OCI-LY7 (cell line): ENCODE measurements at regions of chr7 and their contacts with region 1.

Region 1: DNA sequence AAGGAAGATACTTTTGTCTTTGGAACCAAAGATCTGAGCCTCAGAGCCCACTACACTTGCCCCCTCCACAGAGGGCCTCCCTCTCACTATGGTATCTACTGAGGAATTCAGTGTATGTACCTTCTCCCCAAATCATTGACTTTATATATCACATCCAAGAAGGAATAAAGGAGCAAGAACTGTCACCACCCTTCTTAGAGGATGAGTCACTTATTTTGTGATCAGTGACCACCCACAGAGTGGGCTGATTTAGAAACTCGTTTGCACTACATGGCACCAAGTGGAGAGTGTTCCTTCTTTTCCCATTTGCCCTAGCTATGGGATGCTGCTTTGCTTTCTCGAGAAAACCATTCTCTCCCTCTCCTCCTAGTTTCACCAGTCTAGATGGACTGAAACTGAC is 5.7 kb downstream of the TMEM243 start:
- DNase-seq: no peak
- H3K4me3 ChIP-seq: peak overlapping the region; percentile 82
- H3K27ac ChIP-seq: peak overlapping the region; percentile 98
- H3K4me1 ChIP-seq: peaks cover 63% of the 10 kb centered on the region
- CTCF ChIP-seq: no peak

Region 2: GRCh38 chr7:87027900-87028299 is 185.9 kb before region 1 on chr7:
- CTCF ChIA-PET with region 1: no interaction called
- POLR2A ChIA-PET with region 1: no interaction called
- intact Hi-C with region 1: no loop called
- DNase-seq: peak; percentile 2
- H3K4me3 ChIP-seq: no peak overlapping the region
- H3K27ac ChIP-seq: no peak overlapping the region
- H3K4me1 ChIP-seq: peaks cover 8% of the 10 kb centered on the region
- CTCF ChIP-seq: no peak

Region 3: GRCh38 chr7:87100326-87100725 is 113.5 kb before region 1 on chr7:
- CTCF ChIA-PET with region 1: no interaction called
- POLR2A ChIA-PET with region 1: no interaction called
- intact Hi-C with region 1: no loop called
- DNase-seq: no peak
- H3K4me3 ChIP-seq: no peak overlapping the region
- H3K27ac ChIP-seq: no peak overlapping the region
- H3K4me1 ChIP-seq: no peaks in the 10 kb centered on the region
- CTCF ChIP-seq: no peak

Region 4: DNA sequence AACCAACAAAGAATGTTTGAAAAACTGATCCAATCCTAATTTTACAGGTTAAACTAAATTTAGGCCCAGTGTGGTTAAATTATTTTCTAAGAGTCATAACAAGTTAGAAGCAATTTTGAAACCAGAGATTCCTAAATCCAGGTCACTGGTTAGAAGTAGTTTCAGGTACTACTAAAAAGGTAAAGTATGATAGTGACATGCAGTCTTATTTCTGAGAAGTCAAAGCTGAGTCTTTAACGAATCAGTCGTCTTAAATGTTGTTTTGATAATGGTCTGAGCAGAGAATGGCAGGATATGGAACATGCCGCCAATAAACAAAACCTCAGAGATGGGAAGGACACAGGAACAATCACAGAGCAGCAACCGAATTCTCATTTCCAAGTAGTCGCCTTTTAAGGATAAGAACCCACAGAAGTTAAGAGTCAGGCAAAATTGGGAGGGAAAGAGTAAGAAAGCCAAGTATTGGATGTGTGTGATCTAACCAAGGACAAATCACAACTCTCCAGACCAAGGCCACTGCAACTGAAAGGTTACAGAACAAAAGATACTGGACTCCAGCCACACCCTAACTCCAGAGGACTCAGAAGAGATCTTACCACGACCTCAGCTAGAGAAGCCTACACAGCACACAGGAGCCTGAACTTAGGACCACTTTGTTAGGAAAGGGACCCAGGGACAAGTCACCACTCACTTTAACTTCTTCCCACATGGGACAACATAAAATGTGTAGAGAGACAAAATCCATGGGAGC is 13.9 kb before region 1 on chr7:
- CTCF ChIA-PET with region 1: interaction called, 3 read pairs
- POLR2A ChIA-PET with region 1: interaction called, 36 read pairs
- intact Hi-C with region 1: loop called (anchors 1 kb)
- DNase-seq: no peak
- H3K4me3 ChIP-seq: no peak overlapping the region
- H3K27ac ChIP-seq: no peak overlapping the region
- H3K4me1 ChIP-seq: no peaks in the 10 kb centered on the region
- CTCF ChIP-seq: no peak

Region 5: DNA sequence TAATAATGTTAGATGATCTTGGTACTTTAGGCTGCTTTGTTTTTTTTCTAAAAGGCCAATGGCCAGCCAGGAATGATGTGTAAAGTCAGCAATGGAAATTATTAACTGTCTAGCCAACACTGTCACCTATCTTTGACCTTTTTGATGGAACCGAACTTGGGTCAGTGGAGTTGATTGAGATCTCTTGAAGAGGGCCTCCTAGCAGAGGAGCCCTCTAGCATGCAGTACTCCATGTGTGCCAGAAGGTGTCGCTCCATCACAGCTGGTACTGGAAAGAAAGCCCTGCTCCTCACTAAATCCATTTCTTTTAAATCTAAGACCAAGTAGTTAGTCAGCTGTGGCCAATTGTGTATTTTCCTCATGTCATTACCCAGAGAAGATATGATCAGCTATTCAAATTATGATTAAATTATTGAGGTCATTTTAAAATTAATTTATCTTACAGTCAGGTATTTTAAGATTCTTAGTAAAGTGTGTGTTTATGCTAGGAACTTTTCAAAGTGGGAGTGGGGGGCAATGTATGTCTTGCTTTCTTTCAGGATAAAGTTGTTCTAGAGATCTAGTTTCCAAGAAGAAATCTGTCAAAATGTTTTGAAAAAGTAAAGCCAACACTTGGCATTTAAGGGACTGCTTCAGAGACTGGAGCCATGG is 98.5 kb after region 1 on chr7:
- CTCF ChIA-PET with region 1: no interaction called
- POLR2A ChIA-PET with region 1: no interaction called
- intact Hi-C with region 1: no loop called
- DNase-seq: peak; percentile 61
- H3K4me3 ChIP-seq: no peak overlapping the region
- H3K27ac ChIP-seq: no peak overlapping the region
- H3K4me1 ChIP-seq: no peaks in the 10 kb centered on the region
- CTCF ChIP-seq: peak; percentile 99

Region 6: DNA sequence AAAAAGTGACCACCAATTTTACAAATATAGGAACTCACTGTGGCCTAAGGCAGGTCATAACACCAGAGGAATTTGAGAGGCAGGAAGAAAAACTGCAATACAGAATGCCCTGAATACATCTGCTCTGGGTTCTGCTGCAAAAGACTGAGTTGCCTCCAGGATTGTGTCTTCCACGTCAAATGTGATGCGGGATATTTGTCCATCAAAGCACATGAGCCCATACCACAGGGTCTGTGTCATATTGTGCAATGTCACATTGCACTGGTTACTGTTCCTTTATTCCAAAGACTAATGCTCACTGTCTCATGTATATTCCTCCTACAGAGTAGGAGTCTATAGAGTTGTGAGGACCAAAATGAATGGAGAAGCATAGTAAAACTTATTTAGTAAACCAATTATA is 320.3 kb after region 1 on chr7:
- CTCF ChIA-PET with region 1: no interaction called
- POLR2A ChIA-PET with region 1: no interaction called
- intact Hi-C with region 1: no loop called
- DNase-seq: no peak
- H3K4me3 ChIP-seq: no peak overlapping the region
- H3K27ac ChIP-seq: no peak overlapping the region
- H3K4me1 ChIP-seq: no peaks in the 10 kb centered on the region
- CTCF ChIP-seq: no peak